ENCODE measurements at regions of chr11 and their contacts with region 1.

Region 1: DNA sequence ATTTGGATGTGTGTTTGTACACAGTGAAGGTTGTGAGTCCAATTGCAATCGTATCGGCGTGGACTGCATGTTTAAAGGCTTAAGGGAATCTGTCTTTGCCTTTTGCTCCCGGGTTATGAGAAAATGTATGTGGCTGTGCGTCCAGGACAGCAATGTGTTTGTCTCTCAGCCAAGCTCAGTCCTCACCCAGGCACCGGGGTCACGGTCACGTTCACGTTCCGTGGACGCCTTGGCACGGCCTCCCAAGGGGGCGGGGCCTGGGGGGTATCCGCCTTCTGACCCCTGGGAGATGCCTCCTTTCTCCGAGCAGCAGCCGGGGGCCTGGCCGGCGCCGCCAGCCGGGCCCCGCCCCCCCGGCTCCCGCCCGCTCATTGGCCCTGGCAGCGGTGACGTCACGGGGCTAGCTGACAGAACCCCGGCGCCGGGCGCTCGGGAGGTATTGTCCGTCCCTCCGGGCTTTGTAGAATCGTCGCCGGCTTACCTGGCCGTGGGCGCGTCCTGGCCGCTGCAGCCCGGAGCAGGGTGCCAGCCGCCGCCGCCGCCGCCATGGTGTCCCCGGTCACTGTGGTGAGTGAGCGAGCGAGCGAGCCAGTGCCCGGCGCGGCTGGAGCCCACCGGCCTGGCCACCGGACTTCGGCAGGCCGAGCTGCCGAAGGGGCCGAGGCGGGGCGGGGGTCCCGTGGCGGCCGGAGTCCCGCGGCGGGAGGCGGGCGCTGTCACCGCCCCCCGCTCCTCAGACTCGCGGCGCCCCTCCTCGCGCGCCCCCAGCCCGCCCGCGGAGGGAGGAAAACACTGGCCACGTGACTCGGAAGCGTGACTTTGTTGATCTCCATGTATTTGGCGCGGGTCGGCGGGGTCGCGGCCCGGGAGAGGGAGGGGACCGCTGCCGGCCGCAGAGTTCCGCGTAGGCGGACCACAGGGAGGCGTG is at the start of gene TMEM86A:
- DNase-seq: peak; percentile 80 to 95 (median 90)
- ATAC-seq: peak; percentile 94
- H3K4me3 ChIP-seq: peak within 1 kb of the TSS; percentile 58 to 67
- H3K4me3 Mint-ChIP-seq: peak within 1 kb of the TSS; percentile 84
- H3K27ac ChIP-seq: peak within 1 kb of the TSS; percentile 48 to 51
- H3K27ac Mint-ChIP-seq: peak within 1 kb of the TSS; percentile 86
- H3K4me1 ChIP-seq: peaks cover 10% of the 10 kb centered on the region
- H3K4me1 Mint-ChIP-seq: peaks cover 17% of the 10 kb centered on the region
- H3K27me3 ChIP-seq: no peaks in the 10 kb centered on the region
- H3K27me3 Mint-ChIP-seq: no peaks in the 10 kb centered on the region
- CTCF ChIP-seq: no peak
- total RNA-seq, gene TMEM86A: 5.2 to 6.1 TPM

Region 2: DNA sequence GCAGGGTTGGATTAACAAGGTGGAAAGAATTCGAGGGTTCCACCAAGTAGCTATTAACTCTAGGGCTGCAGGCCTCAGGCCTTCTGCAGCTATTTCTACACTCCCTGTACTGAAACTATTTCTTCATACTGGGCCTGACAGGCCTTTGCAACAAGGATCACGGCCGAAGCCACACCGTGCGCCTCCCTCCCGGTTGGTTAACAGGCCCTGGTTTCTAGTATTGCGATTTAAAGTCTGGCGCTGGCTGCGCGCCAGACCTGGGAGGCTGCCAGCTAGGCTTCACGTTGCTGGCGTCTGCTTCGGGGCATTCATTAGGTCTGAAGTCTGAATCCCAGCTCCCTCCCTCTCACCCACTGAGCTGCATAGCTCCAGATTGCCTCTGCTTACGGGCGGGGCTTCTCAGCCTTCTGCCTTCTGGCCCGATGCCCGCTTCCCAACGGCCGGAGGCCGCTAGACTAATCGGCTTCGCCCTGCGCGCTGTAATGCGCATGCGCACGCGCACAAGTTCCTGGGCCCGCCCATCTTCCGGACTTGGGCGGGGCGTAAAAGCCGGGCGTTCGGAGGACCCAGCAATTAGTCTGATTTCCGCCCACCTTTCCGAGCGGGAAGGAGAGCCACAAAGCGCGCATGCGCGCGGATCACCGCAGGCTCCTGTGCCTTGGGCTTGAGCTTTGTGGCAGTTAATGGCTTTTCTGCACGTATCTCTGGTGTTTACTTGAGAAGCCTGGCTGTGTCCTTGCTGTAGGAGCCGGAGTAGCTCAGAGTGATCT is 302.7 kb before region 1 on chr11:
- CTCF ChIA-PET with region 1: no interaction called
- POLR2A ChIA-PET with region 1: no interaction called
- intact Hi-C with region 1: loop called in 1 of 2 experiments (anchors 10 kb)
- DNase-seq: peak; percentile 89 to 98 (median 92)
- ATAC-seq: peak; percentile 54
- H3K4me3 ChIP-seq: peak overlapping the region; percentile 86 to 98
- H3K4me3 Mint-ChIP-seq: peak overlapping the region; percentile 97
- H3K27ac ChIP-seq: peak overlapping the region; percentile 90
- H3K27ac Mint-ChIP-seq: peak overlapping the region; percentile 96
- H3K4me1 ChIP-seq: peaks cover 22% of the 10 kb centered on the region
- H3K4me1 Mint-ChIP-seq: peaks cover 35% of the 10 kb centered on the region
- H3K27me3 ChIP-seq: no peaks in the 10 kb centered on the region
- H3K27me3 Mint-ChIP-seq: no peaks in the 10 kb centered on the region
- CTCF ChIP-seq: no peak

Region 3: DNA sequence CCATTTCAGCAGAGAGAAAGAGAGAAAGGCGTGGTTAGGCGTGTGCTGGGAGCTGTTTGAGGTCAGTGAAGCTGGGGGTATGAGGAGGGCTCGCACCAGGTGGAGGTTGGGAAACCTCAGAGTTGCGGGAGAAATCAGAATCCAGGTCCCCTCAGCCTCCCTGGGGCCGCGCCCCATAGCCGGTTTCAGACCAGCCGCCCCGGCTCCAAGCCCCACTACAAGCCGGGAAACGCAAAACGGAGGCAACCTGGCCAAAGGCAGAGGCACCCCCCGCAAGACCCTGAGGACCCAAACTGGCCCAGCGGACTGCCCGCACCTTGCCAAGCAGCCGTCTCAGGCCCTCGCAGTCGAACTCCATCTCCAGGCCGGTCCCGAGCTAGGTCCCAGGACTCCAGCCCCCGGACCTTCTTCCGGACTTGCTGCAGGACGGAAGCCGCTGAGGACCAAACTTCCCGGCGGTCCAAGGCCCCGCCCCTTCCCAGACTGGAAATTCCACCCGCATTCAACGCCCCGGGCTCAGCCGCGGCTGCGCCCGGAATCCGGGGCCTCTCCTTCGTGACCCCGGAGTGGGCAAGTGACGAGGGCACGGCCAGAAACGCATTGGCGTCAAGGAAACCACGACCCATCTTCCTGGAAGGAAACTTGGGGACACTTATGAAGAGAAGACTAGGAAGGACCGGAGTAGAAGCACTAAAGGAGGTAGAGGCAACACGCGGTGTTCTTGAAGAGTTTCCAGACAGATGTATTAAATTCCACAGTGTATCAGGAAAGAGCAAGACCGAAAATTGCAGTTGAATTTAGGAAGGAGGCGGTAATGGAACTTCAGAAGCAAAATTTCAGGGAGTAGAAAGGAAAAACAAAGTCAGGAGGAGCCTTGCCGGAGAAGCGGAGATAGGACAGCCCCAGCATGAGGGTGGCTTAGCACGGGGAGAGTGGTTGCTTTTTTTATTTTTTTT is 110.0 kb before region 1 on chr11 and contains the start of gene UEVLD:
- CTCF ChIA-PET with region 1: no interaction called
- POLR2A ChIA-PET with region 1: interaction called, 3 read pairs
- intact Hi-C with region 1: loop called in 1 of 2 experiments (anchors 1 kb)
- DNase-seq: peak; percentile 5 to 85 (median 44)
- ATAC-seq: peak; percentile 55
- H3K4me3 ChIP-seq: peak within 1 kb of the TSS; percentile 75 to 92
- H3K4me3 Mint-ChIP-seq: no peak within 1 kb of the TSS
- H3K27ac ChIP-seq: peak within 1 kb of the TSS; percentile 57 to 92
- H3K27ac Mint-ChIP-seq: no peak within 1 kb of the TSS
- H3K4me1 ChIP-seq: peaks cover 17% of the 10 kb centered on the region
- H3K4me1 Mint-ChIP-seq: peaks cover 10% of the 10 kb centered on the region
- H3K27me3 ChIP-seq: no peaks in the 10 kb centered on the region
- H3K27me3 Mint-ChIP-seq: no peaks in the 10 kb centered on the region
- CTCF ChIP-seq: no peak
- total RNA-seq, gene UEVLD: 1.1 to 2.1 TPM

Region 4: GRCh38 chr11:18669220-18669598 is 29.4 kb before region 1 on chr11:
- CTCF ChIA-PET with region 1: interaction called, 4 read pairs
- POLR2A ChIA-PET with region 1: interaction called, 4 read pairs
- intact Hi-C with region 1: loop called (anchors 1 to 2 kb)
- DNase-seq: peak in 4 of 9 experiments; percentile 2 to 17 (median 16)
- ATAC-seq: no peak
- H3K4me3 ChIP-seq: no peak overlapping the region
- H3K4me3 Mint-ChIP-seq: no peak overlapping the region
- H3K27ac ChIP-seq: no peak overlapping the region
- H3K27ac Mint-ChIP-seq: peak overlapping the region; percentile 7
- H3K4me1 ChIP-seq: peaks cover 37% of the 10 kb centered on the region
- H3K4me1 Mint-ChIP-seq: peaks cover 53% of the 10 kb centered on the region
- H3K27me3 ChIP-seq: no peaks in the 10 kb centered on the region
- H3K27me3 Mint-ChIP-seq: no peaks in the 10 kb centered on the region
- CTCF ChIP-seq: no peak